ENCODE measurements at regions of chr1 and their contacts with region 1.

Region 1: DNA sequence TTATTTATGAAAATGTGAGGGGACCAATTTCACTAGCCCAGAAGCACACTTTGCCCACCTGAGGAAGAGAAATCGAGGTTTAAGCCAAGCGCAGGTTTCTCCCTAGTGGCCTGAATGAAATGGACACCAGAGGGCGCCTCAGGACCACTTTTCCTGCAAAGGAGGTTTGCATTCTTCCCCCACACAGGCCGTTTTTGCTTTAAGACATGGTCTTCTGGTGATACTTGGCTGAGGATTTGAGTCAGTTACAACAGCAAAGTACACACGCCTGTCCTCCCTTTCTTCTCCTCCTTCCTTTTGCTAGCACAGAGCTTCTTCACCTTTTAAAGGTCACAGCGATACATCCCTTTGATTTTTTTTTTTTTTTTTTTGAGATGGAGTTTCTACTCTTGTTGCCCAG is 5.4 kb downstream of the PLA2G2E start:
- DNase-seq: peak; percentile 84
- ATAC-seq: peak; percentile 83

Region 2: GRCh38 chr1:20158358-20159067 is 240.5 kb after region 1 on chr1:
- intact Hi-C with region 1: loop called (anchors 5 kb)
- DNase-seq: no peak
- ATAC-seq: no peak

Measured in left ventricle myocardium superior (tissue), 1 donor.